Activated B cell treated with CpG ODN at 0.5 μM for 24 hours (primary cell): ENCODE measurements at regions of chr6 and their contacts with region 1.

Region 1: GRCh38 chr6:15511248-15512125 is 151.3 kb downstream of the DTNBP1 start:
- DNase-seq: no peak
- ATAC-seq: no peak
- H3K4me3 Mint-ChIP-seq: no peak overlapping the region
- H3K27ac Mint-ChIP-seq: no peak overlapping the region
- H3K4me1 Mint-ChIP-seq: no peaks in the 10 kb centered on the region
- H3K27me3 Mint-ChIP-seq: no peaks in the 10 kb centered on the region
- CTCF ChIP-seq: no peak

Region 2: DNA sequence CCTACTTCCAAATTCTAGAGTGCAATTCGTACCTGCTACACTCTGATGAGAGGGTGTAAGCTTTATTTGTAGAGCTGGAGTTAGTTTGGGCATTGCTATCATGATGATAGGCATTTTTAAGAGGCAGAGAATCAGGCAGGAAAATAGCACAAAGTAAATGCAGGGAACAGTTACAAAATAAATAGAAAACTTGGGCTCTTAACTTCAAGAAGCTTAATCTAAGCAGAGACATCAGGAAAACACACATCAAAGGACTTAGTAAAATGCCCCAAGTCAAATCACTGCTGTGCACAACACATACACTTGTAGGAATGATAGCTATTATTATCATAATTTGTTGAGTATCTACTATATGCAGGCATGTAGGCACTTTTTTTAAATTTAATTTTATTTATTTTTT is 1012.7 kb before region 1 on chr6:
- CTCF ChIA-PET with region 1: no interaction called
- POLR2A ChIA-PET with region 1: interaction called, 12 read pairs
- intact Hi-C with region 1: no loop called
- DNase-seq: no peak
- ATAC-seq: no peak
- H3K4me3 Mint-ChIP-seq: no peak overlapping the region
- H3K27ac Mint-ChIP-seq: no peak overlapping the region
- H3K4me1 Mint-ChIP-seq: no peaks in the 10 kb centered on the region
- H3K27me3 Mint-ChIP-seq: no peaks in the 10 kb centered on the region
- CTCF ChIP-seq: no peak

Region 3: GRCh38 chr6:15023448-15023847 is 488.0 kb before region 1 on chr6:
- CTCF ChIA-PET with region 1: no interaction called
- POLR2A ChIA-PET with region 1: no interaction called
- intact Hi-C with region 1: no loop called
- DNase-seq: no peak
- ATAC-seq: peak; percentile 77
- H3K4me3 Mint-ChIP-seq: peak overlapping the region; percentile 5
- H3K27ac Mint-ChIP-seq: peak overlapping the region; percentile 60
- H3K4me1 Mint-ChIP-seq: peaks cover 10% of the 10 kb centered on the region
- H3K27me3 Mint-ChIP-seq: peaks cover 8% of the 10 kb centered on the region
- CTCF ChIP-seq: no peak

Region 4: GRCh38 chr6:15305496-15305895 is 206.0 kb before region 1 on chr6:
- CTCF ChIA-PET with region 1: no interaction called
- POLR2A ChIA-PET with region 1: no interaction called
- intact Hi-C with region 1: no loop called
- DNase-seq: no peak
- ATAC-seq: peak; percentile 75
- H3K4me3 Mint-ChIP-seq: peak overlapping the region; percentile 62
- H3K27ac Mint-ChIP-seq: peak overlapping the region; percentile 91
- H3K4me1 Mint-ChIP-seq: peaks cover 82% of the 10 kb centered on the region
- H3K27me3 Mint-ChIP-seq: no peaks in the 10 kb centered on the region
- CTCF ChIP-seq: no peak

Region 5: DNA sequence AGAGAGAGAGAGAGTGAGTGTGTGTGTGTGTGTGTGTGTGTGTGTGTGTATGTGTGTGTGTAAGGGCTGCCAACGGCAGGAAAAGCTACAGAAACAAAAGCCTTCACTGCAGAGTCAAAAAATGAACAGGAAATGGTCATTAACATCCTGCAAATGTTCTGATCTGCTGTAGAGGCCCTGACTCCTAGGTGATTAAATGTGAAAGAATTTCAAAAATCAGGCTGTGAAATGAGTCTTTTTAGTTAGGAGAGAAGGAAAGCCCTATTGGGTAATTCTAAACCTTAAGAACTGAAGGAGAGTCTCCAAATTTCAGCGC is 450.9 kb after region 1 on chr6:
- CTCF ChIA-PET with region 1: no interaction called
- POLR2A ChIA-PET with region 1: no interaction called
- intact Hi-C with region 1: no loop called
- DNase-seq: no peak
- ATAC-seq: no peak
- H3K4me3 Mint-ChIP-seq: no peak overlapping the region
- H3K27ac Mint-ChIP-seq: no peak overlapping the region
- H3K4me1 Mint-ChIP-seq: no peaks in the 10 kb centered on the region
- H3K27me3 Mint-ChIP-seq: no peaks in the 10 kb centered on the region
- CTCF ChIP-seq: no peak

Region 6: DNA sequence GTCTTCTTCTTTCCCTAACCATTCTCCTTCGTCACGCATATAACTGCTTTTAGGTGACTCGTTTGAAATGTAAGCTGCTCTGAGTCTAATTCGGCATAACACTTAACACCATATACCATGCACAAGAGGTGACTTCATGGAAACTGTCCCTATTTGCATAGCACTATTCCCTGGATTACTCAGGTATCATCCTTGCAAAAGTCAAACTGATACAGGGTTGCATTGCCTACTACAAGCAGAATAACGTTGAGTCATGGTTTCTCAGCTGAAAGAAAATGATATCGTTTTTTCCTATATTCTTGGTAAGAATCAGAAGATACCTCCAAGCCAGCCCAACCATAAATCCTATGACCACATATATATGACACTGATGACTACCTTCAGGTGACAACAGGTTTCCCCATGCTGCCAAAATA is 1022.2 kb after region 1 on chr6:
- CTCF ChIA-PET with region 1: no interaction called
- POLR2A ChIA-PET with region 1: no interaction called
- intact Hi-C with region 1: no loop called
- DNase-seq: no peak
- ATAC-seq: no peak
- H3K4me3 Mint-ChIP-seq: no peak overlapping the region
- H3K27ac Mint-ChIP-seq: no peak overlapping the region
- H3K4me1 Mint-ChIP-seq: peaks cover 7% of the 10 kb centered on the region
- H3K27me3 Mint-ChIP-seq: no peaks in the 10 kb centered on the region
- CTCF ChIP-seq: no peak